ENCODE measurements at regions of chr12 and their contacts with region 1.

Region 1: GRCh38 chr12:56521590-56522371 is at the start of gene RBMS2:
- DNase-seq: peak; percentile 67 to 77 (median 77)
- ATAC-seq: peak; percentile 95
- H3K4me3 ChIP-seq: peak within 1 kb of the TSS; percentile 11
- H3K4me1 ChIP-seq: peaks cover 10% of the 10 kb centered on the region
- CTCF ChIP-seq: no peak
- total RNA-seq, gene RBMS2: 35.9 to 47.8 (median 41.0) TPM

Region 2: GRCh38 chr12:56636675-56637540 is 115.1 kb after region 1 on chr12:
- intact Hi-C with region 1: loop called in 1 of 2 experiments (anchors 10 kb)
- DNase-seq: peak; percentile 98 to 99 (median 99)
- ATAC-seq: peak; percentile 74
- H3K4me3 ChIP-seq: peak overlapping the region; percentile 4
- H3K4me1 ChIP-seq: peaks cover 45% of the 10 kb centered on the region
- CTCF ChIP-seq: peak; percentile 42

Region 3: GRCh38 chr12:56957229-56957939 is 435.6 kb after region 1 on chr12 and contains the start of gene RDH16:
- intact Hi-C with region 1: no loop called
- DNase-seq: peak in 1 of 3 donors; percentile 28
- ATAC-seq: peak; percentile 75
- H3K4me3 ChIP-seq: no peak within 1 kb of the TSS
- H3K4me1 ChIP-seq: no peaks in the 10 kb centered on the region
- CTCF ChIP-seq: no peak
- total RNA-seq, gene RDH16: 0.14 to 0.28 (median 0.19) TPM

Region 4: GRCh38 chr12:57008178-57008577 is 486.4 kb after region 1 on chr12:
- intact Hi-C with region 1: no loop called
- DNase-seq: peak in 1 of 3 donors; percentile 25
- ATAC-seq: peak; percentile 48
- H3K4me3 ChIP-seq: no peak overlapping the region
- H3K4me1 ChIP-seq: peaks cover 8% of the 10 kb centered on the region
- CTCF ChIP-seq: no peak

Measured in mucosa of descending colon (tissue), 3 donors.